ENCODE measurements at regions of chr20 and their contacts with region 1.

Region 1: DNA sequence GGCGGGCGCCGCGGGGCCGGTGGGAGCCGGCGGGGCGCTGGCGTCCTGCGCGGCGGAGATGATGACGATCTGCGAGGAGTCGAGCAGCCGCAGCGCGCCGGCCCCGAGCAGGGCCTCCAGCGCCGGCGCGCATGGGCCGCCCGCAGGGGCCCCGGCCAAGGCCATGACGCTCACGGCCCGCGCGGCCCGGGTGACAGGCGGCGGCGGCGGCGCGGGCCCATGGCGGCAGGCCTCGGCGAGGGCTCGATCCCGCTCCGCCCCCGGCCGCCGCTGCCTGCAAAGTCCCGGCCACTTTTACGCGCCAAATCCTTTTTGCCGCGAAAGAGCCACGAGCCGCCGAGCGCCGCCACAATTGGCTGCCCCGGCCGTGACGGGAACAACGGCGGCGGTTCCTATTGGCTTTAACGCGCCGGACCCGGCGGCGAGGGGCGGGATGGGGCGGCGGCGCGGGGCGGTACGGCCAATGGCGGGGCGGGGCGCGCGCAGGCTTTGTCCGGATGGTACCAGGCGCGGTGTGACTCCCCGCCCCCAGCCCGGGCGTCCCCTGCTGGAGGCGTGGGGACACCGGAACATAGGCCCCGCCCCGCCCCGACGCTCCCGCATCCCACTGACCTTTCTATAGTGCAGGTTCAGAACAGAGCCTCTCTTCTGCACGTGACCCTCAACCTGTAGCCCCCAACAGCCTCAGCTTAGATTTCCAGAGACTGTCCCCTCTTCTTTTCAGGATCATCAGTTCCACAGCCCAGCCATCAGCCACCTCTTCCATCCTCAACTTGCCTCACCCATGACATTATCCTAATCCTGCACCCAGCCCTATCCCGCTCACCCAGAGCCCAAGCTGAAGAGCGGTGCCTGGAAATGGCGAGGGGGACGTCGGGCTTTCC is at the start of gene E2F1:
- DNase-seq: peak; percentile 98
- ATAC-seq: peak; percentile 84
- H3K4me3 Mint-ChIP-seq: peak within 1 kb of the TSS; percentile 95
- H3K27ac Mint-ChIP-seq: peak within 1 kb of the TSS; percentile 83
- H3K4me1 Mint-ChIP-seq: peaks cover 73% of the 10 kb centered on the region
- H3K27me3 Mint-ChIP-seq: no peaks in the 10 kb centered on the region
- total RNA-seq, gene E2F1: 45.9 to 50.9 TPM

Region 2: GRCh38 chr20:33443512-33444239 is 242.7 kb before region 1 on chr20 and contains the start of gene SNTA1:
- CTCF ChIA-PET with region 1: interaction called, 3 read pairs
- POLR2A ChIA-PET with region 1: no interaction called
- intact Hi-C with region 1: loop called in 1 of 2 experiments (anchors 1 kb)
- DNase-seq: peak; percentile 95
- ATAC-seq: peak; percentile 92
- H3K4me3 Mint-ChIP-seq: peak within 1 kb of the TSS; percentile 83
- H3K27ac Mint-ChIP-seq: peak within 1 kb of the TSS; percentile 78
- H3K4me1 Mint-ChIP-seq: peaks cover 15% of the 10 kb centered on the region
- H3K27me3 Mint-ChIP-seq: no peaks in the 10 kb centered on the region
- total RNA-seq, gene SNTA1: 4.2 to 5.0 TPM

Region 3: GRCh38 chr20:33653218-33653899 is 33.0 kb before region 1 on chr20:
- CTCF ChIA-PET with region 1: no interaction called
- POLR2A ChIA-PET with region 1: no interaction called
- intact Hi-C with region 1: loop called in 1 of 2 experiments (anchors 1 kb)
- DNase-seq: peak; percentile 61
- ATAC-seq: peak; percentile 34
- H3K4me3 Mint-ChIP-seq: no peak overlapping the region
- H3K27ac Mint-ChIP-seq: peak overlapping the region; percentile 78
- H3K4me1 Mint-ChIP-seq: peaks cover 41% of the 10 kb centered on the region
- H3K27me3 Mint-ChIP-seq: no peaks in the 10 kb centered on the region

Region 4: DNA sequence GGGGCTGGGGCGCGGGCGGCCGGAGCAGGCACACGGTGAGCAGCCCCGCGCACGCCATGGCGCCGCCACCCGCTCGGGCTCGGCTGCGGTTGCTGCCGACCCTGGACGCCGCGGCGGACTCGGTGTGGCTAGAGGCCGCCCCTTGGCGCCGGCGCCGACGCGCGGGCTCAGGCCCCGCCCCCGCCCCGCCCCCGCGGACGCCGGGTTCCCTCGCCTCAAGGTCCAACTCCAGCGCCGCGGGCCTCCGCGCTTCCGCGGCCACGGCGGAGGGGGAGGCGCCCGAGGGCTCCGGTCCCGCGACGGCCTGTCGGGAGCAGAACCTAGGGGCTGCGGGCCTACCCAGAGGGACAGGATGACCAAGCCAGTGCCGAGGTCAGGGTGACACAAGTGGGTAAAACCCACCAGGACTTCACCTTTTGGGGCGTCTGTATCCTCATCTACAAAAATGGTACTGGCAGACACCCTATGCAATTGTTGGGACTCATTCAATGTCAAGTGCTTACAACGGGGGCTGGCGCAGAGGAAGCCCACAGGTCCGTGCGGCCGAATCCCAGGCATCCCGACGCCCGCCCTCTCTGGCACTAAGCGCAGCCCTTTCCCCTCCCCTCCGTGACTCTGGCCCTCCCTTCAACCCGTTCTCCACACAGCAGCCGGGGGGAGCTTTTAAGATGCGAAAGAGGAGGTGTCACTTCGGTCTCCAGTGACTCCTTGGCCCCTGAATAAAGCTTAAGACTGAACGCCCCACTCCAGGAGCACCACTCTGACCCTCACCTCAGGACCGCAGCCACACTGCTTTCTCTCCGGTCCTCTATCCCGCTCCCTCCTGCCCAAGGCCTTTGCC is 11.8 kb before region 1 on chr20 and contains the start of gene NECAB3:
- CTCF ChIA-PET with region 1: interaction called, 91 read pairs
- POLR2A ChIA-PET with region 1: interaction called, 8 read pairs
- intact Hi-C with region 1: loop called in 1 of 2 experiments (anchors 1 kb)
- DNase-seq: peak; percentile 74
- ATAC-seq: peak; percentile 69
- H3K4me3 Mint-ChIP-seq: peak within 1 kb of the TSS; percentile 79
- H3K27ac Mint-ChIP-seq: peak within 1 kb of the TSS; percentile 76
- H3K4me1 Mint-ChIP-seq: peaks cover 42% of the 10 kb centered on the region
- H3K27me3 Mint-ChIP-seq: no peaks in the 10 kb centered on the region
- total RNA-seq, gene NECAB3: 12.2 to 13.3 TPM

Region 5: DNA sequence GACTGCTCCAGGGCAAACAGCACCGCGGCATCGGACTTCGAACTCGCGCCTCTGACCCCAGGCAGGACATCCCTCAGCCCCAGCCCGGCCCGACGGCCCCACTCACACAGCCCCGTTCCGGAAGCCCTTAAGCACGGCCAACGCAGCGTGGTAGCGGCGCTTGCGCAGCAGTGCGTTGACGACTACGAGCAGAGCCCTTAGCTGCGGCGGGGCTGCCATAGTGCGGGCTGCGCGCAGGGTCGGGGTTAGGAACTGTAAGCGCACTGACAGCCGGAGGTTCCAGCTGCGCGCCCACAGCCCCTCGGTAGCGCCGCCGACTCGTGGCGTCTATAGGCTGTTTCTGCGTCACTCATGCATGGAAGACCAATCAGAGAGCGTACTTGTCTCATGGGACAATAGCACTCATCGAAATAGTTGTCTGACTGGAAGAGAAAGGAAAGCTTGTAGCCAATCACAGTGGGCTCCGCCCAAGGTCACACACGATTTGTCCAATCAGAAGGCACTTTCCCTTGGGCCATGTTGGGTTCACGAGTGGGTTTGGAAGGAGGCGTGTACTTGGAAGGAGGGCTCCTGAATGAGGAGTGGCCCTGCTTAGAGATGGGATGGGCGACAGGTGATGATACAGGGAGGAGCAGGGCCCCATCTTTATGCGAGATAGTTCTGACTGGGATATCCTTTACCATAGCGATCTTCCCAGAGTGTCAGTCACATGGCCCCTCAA is 33.8 kb after region 1 on chr20 and contains the start of gene PXMP4:
- CTCF ChIA-PET with region 1: interaction called, 10 read pairs
- POLR2A ChIA-PET with region 1: interaction called, 7 read pairs
- intact Hi-C with region 1: loop called (anchors 1 kb)
- DNase-seq: peak; percentile 92
- ATAC-seq: peak; percentile 99
- H3K4me3 Mint-ChIP-seq: peak within 1 kb of the TSS; percentile 88
- H3K27ac Mint-ChIP-seq: peak within 1 kb of the TSS; percentile 83
- H3K4me1 Mint-ChIP-seq: peaks cover 18% of the 10 kb centered on the region
- H3K27me3 Mint-ChIP-seq: no peaks in the 10 kb centered on the region
- total RNA-seq, gene PXMP4: 8.8 to 10.2 TPM

Region 6: GRCh38 chr20:35541783-35542588 is 1855.6 kb after region 1 on chr20 and contains the start of gene ERGIC3:
- CTCF ChIA-PET with region 1: no interaction called
- POLR2A ChIA-PET with region 1: no interaction called
- intact Hi-C with region 1: loop called in 1 of 2 experiments (anchors 5 kb)
- DNase-seq: peak; percentile 99
- ATAC-seq: peak; percentile 99
- H3K4me3 Mint-ChIP-seq: peak within 1 kb of the TSS; percentile 83
- H3K27ac Mint-ChIP-seq: peak within 1 kb of the TSS; percentile 83
- H3K4me1 Mint-ChIP-seq: peaks cover 15% of the 10 kb centered on the region
- H3K27me3 Mint-ChIP-seq: no peaks in the 10 kb centered on the region
- total RNA-seq, gene ERGIC3: 109 to 127 TPM